CD4-positive, alpha-beta memory T cell (primary cell): ENCODE measurements at regions of chr1 and their contacts with region 1.

Region 1: DNA sequence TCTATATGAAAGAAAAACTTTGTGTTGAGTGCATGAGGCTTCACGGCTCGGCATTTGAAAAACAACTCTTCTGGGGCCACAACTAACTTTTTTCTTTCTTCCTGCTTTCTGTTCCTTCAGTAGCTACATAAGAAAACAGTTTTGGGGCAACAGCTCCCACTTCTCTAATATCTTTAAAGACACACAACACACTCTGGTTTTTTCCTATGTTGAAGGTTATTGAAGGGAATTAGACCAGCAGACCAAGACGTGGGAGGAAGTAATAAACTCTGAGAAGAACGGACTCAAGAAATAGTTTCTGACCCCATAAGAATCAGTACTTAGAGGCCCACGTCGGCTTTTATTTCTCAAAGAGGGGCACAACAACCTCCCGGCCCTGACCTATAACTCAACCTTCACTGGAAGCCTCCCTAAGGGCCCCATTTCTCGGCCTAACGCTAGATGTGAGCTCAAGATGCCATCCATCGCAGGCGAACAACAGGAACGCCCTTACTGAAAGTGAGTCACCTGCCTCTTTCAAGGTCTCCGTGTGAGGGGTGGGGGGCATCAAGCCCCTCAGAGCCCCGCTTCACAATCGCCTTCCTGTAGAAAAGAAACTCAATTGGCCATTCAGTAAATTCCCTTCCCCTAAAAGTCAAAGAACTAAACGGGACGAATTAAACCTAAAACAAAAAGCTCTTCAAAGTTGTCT is 844 bp downstream of the ZMYM6 start:
- DNase-seq: peak in 2 of 5 donors; percentile 3 to 59
- H3K4me3 ChIP-seq: peak overlapping the region; percentile 77 to 84
- H3K4me3 Mint-ChIP-seq: peak overlapping the region; percentile 97 to 100 (median 99)
- H3K27ac ChIP-seq: peak overlapping the region; percentile 82
- H3K27ac Mint-ChIP-seq: peak overlapping the region; percentile 93 to 100 (median 99)
- H3K4me1 ChIP-seq: peaks cover 31% of the 10 kb centered on the region
- H3K4me1 Mint-ChIP-seq: peaks cover 28 to 50% (median 41%) of the 10 kb centered on the region in 4 donors
- H3K27me3 ChIP-seq: no peaks in the 10 kb centered on the region
- H3K27me3 Mint-ChIP-seq: no peaks in the 10 kb centered on the region

Region 2: DNA sequence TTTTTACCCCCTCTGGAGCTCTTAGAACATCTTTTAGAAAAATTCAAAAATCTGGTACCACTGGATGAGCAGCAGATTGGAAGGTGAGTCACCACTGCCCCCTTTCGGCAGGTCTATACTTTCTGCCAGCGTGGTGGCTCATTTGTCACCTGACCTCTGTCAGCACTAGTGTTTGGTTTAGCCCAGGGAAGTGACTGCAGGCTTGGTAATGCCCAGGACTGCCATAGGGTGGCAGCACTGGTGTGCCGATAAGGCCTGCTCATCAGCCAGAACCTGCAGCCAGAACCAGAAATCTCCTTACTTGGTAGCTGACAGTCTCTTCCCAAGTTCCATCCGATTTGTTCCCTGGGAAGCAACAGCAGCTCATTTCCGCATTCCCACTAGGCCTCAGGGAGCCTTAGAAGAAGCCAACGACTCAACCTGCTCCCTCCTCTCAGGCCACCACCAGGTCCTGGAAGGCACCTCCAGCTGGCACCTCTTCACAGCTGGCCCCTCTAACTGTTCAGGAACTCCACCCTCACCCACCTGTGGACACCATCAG is 178.2 kb before region 1 on chr1:
- CTCF ChIA-PET with region 1: no interaction called
- POLR2A ChIA-PET with region 1: no interaction called
- intact Hi-C with region 1: loop called (anchors 5 kb)
- DNase-seq: peak; percentile 87 to 95 (median 90)
- H3K4me3 ChIP-seq: no peak overlapping the region
- H3K4me3 Mint-ChIP-seq: no peak overlapping the region
- H3K27ac ChIP-seq: peak overlapping the region; percentile 10
- H3K27ac Mint-ChIP-seq: peak overlapping the region in 6 of 7 donors; percentile 57 to 90 (median 72)
- H3K4me1 ChIP-seq: peaks cover 9% of the 10 kb centered on the region
- H3K4me1 Mint-ChIP-seq: peaks cover 24 to 42% (median 27%) of the 10 kb centered on the region in 4 donors
- H3K27me3 ChIP-seq: no peaks in the 10 kb centered on the region
- H3K27me3 Mint-ChIP-seq: no peaks in the 10 kb centered on the region

Region 3: GRCh38 chr1:34865981-34866761 is 164.7 kb before region 1 on chr1:
- CTCF ChIA-PET with region 1: interaction called, 3 read pairs
- POLR2A ChIA-PET with region 1: interaction called, 3 read pairs
- intact Hi-C with region 1: loop called (anchors 5 kb)
- DNase-seq: peak; percentile 85 to 92 (median 91)
- H3K4me3 ChIP-seq: peak overlapping the region; percentile 61 to 69
- H3K4me3 Mint-ChIP-seq: peak overlapping the region; percentile 85 to 92 (median 88)
- H3K27ac ChIP-seq: peak overlapping the region; percentile 74
- H3K27ac Mint-ChIP-seq: peak overlapping the region; percentile 86 to 95 (median 92)
- H3K4me1 ChIP-seq: peaks cover 36% of the 10 kb centered on the region
- H3K4me1 Mint-ChIP-seq: peaks cover 20 to 56% (median 34%) of the 10 kb centered on the region in 4 donors
- H3K27me3 ChIP-seq: no peaks in the 10 kb centered on the region
- H3K27me3 Mint-ChIP-seq: peaks cover 1 to 3% of the 10 kb centered on the region in 2 donors

Region 4: DNA sequence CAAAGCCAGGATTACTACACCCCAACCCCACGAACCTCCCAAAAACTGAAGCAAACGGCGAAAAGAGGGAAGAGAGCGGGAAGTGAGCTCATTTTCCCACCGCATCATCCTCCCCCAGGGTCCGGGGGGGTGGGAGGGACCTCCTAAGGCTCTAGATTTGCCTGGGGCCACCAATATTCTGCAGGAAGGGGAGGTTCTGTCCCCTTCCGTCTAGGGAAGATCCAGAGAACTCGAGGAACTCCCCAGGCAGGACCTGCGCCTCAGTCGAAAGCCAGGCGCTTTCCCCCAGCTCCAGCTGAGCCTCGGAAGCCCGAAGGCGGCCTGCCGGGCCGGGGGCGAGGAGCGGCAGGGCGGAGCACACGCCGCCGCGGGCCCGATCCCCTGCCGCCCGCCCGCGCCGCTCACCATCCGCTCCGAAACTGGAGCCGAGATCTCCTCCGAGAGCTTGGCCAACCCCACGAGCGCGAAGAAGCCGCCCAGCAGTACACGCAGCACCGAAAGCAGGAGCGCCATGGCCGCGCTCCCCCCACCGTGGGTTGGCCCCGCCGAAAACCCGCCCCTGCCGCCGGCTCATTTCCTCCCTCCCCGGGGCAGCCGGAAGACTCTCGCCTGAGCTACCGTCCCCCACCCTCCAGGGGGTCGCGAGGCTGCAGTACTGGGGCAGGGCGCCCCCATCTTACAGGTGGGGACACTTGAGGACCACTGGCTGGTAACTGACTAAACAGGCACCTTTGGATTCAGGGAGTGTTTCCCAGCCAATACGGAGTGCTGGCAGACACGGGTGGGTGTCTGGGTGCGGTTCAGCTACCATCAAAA is 45.9 kb before region 1 on chr1 and contains the start of gene TMEM35B:
- CTCF ChIA-PET with region 1: interaction called, 3 read pairs
- POLR2A ChIA-PET with region 1: interaction called, 33 read pairs
- intact Hi-C with region 1: loop called (anchors 2 kb)
- DNase-seq: peak; percentile 77 to 80 (median 80)
- H3K4me3 ChIP-seq: peak within 1 kb of the TSS; percentile 48 to 88
- H3K4me3 Mint-ChIP-seq: peak within 1 kb of the TSS; percentile 95 to 100 (median 99)
- H3K27ac ChIP-seq: peak within 1 kb of the TSS; percentile 81
- H3K27ac Mint-ChIP-seq: peak within 1 kb of the TSS; percentile 95 to 99 (median 98)
- H3K4me1 ChIP-seq: peaks cover 27% of the 10 kb centered on the region
- H3K4me1 Mint-ChIP-seq: peaks cover 20 to 59% (median 39%) of the 10 kb centered on the region in 4 donors
- H3K27me3 ChIP-seq: no peaks in the 10 kb centered on the region
- H3K27me3 Mint-ChIP-seq: no peaks in the 10 kb centered on the region
- total RNA-seq, gene TMEM35B: 51.7 to 54.2 TPM

Region 5: GRCh38 chr1:35047188-35047858 is 16.4 kb after region 1 on chr1:
- CTCF ChIA-PET with region 1: no interaction called
- POLR2A ChIA-PET with region 1: no interaction called
- intact Hi-C with region 1: no loop called
- DNase-seq: no peak
- H3K4me3 ChIP-seq: no peak overlapping the region
- H3K4me3 Mint-ChIP-seq: no peak overlapping the region
- H3K27ac ChIP-seq: no peak overlapping the region
- H3K27ac Mint-ChIP-seq: peak overlapping the region in 3 of 7 donors; percentile 64 to 88 (median 70)
- H3K4me1 ChIP-seq: no peaks in the 10 kb centered on the region
- H3K4me1 Mint-ChIP-seq: no peaks in the 10 kb centered on the region
- H3K27me3 ChIP-seq: no peaks in the 10 kb centered on the region
- H3K27me3 Mint-ChIP-seq: peaks cover 1 to 3% of the 10 kb centered on the region in 2 donors

Region 6: DNA sequence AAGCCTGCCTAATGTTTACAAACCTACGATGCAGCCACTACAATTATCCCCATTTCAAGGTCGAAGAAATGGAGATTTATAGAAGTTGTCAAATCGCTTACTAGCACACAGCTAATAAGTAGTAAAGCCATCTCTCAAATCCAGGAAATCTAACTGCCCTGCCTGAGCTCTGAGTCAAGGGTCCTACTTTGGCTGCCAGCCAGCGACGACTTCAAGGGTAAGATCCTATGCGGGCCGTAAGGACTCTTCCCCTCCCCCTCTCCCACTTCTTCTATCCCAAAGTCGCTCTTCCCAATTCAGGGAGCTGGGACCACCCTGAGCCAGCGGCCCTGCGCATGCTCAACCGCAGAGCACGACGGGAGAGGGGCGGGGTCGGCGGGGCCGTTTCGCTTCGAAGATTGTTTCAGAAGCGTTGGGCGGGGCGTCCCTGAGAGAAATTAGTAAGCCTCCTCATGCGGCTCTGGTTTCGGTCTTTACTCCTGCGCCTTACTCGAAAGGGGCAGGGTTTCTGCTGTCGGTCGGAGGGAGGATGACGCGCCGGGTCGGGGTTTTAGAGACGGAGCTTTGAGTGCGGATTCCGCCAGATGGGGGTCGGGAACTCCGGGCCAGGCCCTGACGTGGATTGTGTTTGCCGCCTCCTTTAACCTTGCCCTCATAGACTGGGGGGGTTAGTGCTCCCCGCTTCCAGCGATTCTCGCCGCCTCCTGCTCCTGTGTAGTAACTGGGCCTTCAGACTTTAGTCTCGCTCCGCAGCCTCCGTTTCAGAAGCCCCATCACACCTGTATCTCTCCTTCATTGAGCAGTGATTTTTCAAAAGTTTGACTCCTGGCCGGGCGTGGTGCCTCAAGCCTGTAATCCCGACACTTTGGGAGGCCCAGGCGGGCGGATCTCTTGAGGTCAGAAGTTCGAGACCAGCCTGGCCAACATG is 48.4 kb after region 1 on chr1 and contains the start of gene ZMYM1:
- CTCF ChIA-PET with region 1: interaction called, 6 read pairs
- POLR2A ChIA-PET with region 1: interaction called, 12 read pairs
- intact Hi-C with region 1: loop called (anchors 5 kb)
- DNase-seq: peak; percentile 75 to 85 (median 80)
- H3K4me3 ChIP-seq: peak within 1 kb of the TSS; percentile 69 to 94
- H3K4me3 Mint-ChIP-seq: peak within 1 kb of the TSS; percentile 98 to 100 (median 99)
- H3K27ac ChIP-seq: peak within 1 kb of the TSS; percentile 71
- H3K27ac Mint-ChIP-seq: peak within 1 kb of the TSS; percentile 98 to 100 (median 99)
- H3K4me1 ChIP-seq: peaks cover 22% of the 10 kb centered on the region
- H3K4me1 Mint-ChIP-seq: peaks cover 16 to 39% (median 29%) of the 10 kb centered on the region in 4 donors
- H3K27me3 ChIP-seq: no peaks in the 10 kb centered on the region
- H3K27me3 Mint-ChIP-seq: peaks cover 5 to 6% of the 10 kb centered on the region in 2 donors
- total RNA-seq, gene ZMYM1: 24.6 to 25.9 TPM

Region 7: DNA sequence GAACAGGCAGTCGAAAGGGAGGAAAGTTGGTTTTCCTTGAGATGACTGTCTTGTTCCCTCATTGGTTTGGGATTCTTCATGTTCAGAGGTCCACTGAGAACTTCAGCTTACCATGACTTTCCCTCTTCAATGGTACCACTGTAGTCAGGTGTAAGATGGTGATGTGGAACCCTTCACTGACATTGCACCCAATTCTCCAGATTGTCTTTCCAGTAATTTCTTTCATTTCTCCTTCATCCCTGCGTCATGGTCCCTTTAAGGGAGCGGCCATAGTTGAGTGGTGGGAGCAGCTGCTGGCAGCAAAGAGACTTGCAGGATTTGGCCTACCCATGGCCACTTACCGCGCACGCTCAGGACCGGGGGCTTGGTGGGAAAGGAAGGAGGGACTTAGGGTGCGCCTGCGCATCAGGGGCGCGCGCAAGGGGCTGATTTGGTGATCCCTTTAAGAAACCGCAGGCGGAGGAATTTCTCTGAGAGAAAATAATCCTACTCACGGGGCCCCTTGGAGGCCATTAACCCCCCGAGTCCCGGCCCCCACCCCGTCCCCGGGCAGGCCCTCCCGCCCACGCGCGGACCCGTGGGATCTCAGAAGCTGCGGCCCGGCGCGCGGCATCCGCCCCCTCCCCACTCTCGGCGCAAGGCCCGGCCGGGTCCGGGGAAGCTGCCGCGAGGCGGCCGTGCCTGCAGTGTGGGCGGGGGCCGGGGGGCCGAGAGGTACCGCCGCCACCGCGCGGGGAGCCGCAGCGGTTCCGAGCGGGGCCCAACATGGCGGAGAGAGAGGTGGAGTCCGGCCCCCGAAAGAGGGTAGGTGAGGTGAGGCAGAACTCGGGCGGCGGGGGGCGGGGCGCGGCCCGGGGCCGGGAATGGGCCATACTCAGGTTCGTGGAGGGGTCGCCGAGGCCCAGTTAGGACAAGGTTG is 237.6 kb after region 1 on chr1 and contains the start of gene ZMYM4:
- CTCF ChIA-PET with region 1: no interaction called
- POLR2A ChIA-PET with region 1: no interaction called
- intact Hi-C with region 1: loop called (anchors 2 kb)
- DNase-seq: peak; percentile 85 to 93 (median 90)
- H3K4me3 ChIP-seq: peak within 1 kb of the TSS; percentile 44 to 57
- H3K4me3 Mint-ChIP-seq: peak within 1 kb of the TSS; percentile 89 to 95 (median 90)
- H3K27ac ChIP-seq: peak within 1 kb of the TSS; percentile 67
- H3K27ac Mint-ChIP-seq: peak within 1 kb of the TSS; percentile 84 to 95 (median 92)
- H3K4me1 ChIP-seq: peaks cover 20% of the 10 kb centered on the region
- H3K4me1 Mint-ChIP-seq: peaks cover 23 to 36% (median 29%) of the 10 kb centered on the region in 4 donors
- H3K27me3 ChIP-seq: no peaks in the 10 kb centered on the region
- H3K27me3 Mint-ChIP-seq: peaks cover 2 to 3% of the 10 kb centered on the region in 2 donors
- total RNA-seq, gene ZMYM4: 41.8 to 41.9 TPM

Region 8: DNA sequence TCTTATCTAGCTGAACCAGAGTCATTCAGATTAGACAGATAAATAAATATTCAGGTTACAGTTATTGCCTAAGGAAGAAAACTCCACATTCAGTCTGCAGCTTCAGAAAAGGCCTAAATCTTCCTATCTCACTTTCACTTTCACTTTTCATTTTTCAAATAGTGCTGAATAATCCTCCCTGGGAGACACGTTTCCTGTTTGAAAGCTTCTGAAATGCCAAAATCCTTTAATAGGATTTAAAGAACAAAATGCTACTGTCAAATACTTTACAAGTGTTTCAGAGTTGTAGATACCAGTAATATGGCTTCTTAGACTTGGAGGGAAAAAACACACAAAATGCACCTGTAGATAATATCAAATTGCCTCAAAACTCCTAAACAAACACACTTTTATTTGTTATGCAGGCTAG is 606.5 kb after region 1 on chr1:
- CTCF ChIA-PET with region 1: no interaction called
- POLR2A ChIA-PET with region 1: no interaction called
- intact Hi-C with region 1: no loop called
- DNase-seq: peak in 4 of 5 donors; percentile 39 to 50 (median 46)
- H3K4me3 ChIP-seq: peak overlapping the region; percentile 42 to 47
- H3K4me3 Mint-ChIP-seq: peak overlapping the region; percentile 67 to 87 (median 83)
- H3K27ac ChIP-seq: peak overlapping the region; percentile 58
- H3K27ac Mint-ChIP-seq: peak overlapping the region; percentile 86 to 96 (median 94)
- H3K4me1 ChIP-seq: peaks cover 46% of the 10 kb centered on the region
- H3K4me1 Mint-ChIP-seq: peaks cover 26 to 45% (median 40%) of the 10 kb centered on the region in 4 donors
- H3K27me3 ChIP-seq: no peaks in the 10 kb centered on the region
- H3K27me3 Mint-ChIP-seq: peaks cover 0 to 3% of the 10 kb centered on the region in 2 donors